A549 (cell line): ENCODE measurements at regions of chr7 and their contacts with region 1.

Region 1: GRCh38 chr7:42931834-42932651 is at the starts of genes MRPL32 and PSMA2:
- DNase-seq: peak; percentile 96 to 99
- ATAC-seq: peak; percentile 99 to 100
- H3K4me3 ChIP-seq: peak within 1 kb of the TSS; percentile 85
- H3K27ac ChIP-seq: peak within 1 kb of the TSS; percentile 87 to 93
- H3K4me1 ChIP-seq: peaks cover 21% of the 10 kb centered on the region; the same call in 2 of the 3 replicates
- CTCF ChIP-seq: no peak
- EP300 ChIP-seq: no peak
- POLR2A ChIP-seq: peak; percentile 90
- RAD21 ChIP-seq: no peak
- polyA plus RNA-seq, gene MRPL32: 68.1 and 90.4 TPM in 2 replicates
- polyA plus RNA-seq, gene PSMA2: 241 and 324 TPM in 2 replicates

Region 2: DNA sequence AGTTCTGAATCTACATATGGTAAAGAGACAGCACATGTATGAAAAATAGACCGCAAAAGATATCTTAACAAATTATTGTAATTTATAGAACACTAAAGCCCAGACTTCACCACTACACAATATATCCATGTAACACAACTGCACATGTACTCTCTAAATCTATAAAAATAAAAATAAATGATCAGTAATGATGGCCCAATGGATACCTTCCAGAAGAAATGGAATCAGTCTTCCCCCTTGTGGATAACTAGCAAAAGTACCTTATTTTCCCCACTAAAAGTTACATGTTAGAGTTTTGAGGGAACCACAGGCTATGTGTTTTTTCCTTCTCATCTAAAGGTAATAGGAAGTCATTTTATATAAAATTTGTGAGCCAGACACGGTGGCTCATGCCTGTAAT is 45.9 kb before region 1 on chr7:
- CTCF ChIA-PET with region 1: no interaction called
- POLR2A ChIA-PET with region 1: interaction called, 15 read pairs
- DNase-seq: peak in 1 of 2 experiments; percentile 20
- ATAC-seq: no peak
- H3K4me3 ChIP-seq: no peak overlapping the region
- H3K27ac ChIP-seq: no peak overlapping the region
- H3K4me1 ChIP-seq: peaks cover 17% of the 10 kb centered on the region; the same call in 2 of the 3 replicates
- CTCF ChIP-seq: peak; percentile 46
- EP300 ChIP-seq: no peak
- POLR2A ChIP-seq: no peak
- RAD21 ChIP-seq: peak; percentile 35 to 44; a peak in 4 of 5 replicates

Region 3: DNA sequence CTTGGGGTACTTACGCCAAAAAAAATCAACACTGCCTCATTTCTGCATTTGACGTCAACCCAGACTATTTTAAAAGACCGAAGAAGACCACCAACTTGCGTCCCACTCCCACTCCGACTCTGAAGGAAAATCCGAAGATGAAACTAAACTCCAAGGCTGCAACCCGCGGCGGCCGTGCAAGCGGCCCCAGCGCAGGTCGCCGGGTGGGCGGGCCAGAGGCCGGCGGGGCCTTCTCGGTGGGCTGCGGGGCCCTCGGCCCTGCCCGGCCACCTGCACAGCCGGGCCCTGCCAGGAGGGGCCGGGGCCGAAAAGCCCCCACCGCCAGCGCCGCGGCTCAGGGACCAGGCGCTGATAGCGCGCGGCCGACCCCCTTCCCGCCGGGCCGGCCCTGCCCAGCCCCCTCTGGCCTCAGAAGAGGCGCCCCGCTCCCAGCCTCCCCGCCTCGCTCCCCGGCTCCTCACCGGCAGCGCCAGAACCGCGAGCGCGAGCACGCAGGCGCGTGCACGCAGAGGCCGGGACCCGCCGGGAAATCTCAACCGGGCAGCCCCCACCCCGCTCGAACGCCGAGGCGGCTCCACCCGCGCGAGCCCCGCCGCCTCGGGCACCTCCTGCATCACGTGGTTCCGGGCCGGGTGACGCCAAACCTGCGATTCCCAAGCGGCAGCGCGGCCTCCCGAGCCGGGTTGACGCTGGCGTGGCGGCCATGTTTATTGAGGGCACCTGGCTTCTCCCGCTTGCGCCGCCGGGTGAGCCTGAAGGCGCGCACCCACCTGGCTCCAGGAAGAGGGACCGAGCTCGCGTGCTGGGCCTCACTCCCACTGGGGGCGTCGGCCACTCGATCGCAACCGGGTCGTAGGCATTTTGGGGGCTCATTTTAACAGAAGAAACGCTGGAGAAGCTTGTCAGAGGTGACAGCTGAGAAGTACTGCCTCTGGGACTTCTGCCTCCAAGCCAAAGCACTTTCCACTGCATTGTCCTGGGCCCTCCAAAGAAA is 20.3 kb before region 1 on chr7 and contains the start of gene C7orf25:
- CTCF ChIA-PET with region 1: interaction called, 3 read pairs
- POLR2A ChIA-PET with region 1: interaction called, 23 read pairs
- DNase-seq: peak; percentile 84 to 95
- ATAC-seq: peak; percentile 93 to 96
- H3K4me3 ChIP-seq: peak within 1 kb of the TSS; percentile 79
- H3K27ac ChIP-seq: peak within 1 kb of the TSS; percentile 87 to 95
- H3K4me1 ChIP-seq: peaks cover 13% of the 10 kb centered on the region
- CTCF ChIP-seq: no peak
- EP300 ChIP-seq: no peak
- POLR2A ChIP-seq: peak; percentile 43
- RAD21 ChIP-seq: no peak
- polyA plus RNA-seq, gene C7orf25: 3.7 and 4.2 TPM in 2 replicates